ENCODE measurements at regions of chr1 and their contacts with region 1.

Region 1: DNA sequence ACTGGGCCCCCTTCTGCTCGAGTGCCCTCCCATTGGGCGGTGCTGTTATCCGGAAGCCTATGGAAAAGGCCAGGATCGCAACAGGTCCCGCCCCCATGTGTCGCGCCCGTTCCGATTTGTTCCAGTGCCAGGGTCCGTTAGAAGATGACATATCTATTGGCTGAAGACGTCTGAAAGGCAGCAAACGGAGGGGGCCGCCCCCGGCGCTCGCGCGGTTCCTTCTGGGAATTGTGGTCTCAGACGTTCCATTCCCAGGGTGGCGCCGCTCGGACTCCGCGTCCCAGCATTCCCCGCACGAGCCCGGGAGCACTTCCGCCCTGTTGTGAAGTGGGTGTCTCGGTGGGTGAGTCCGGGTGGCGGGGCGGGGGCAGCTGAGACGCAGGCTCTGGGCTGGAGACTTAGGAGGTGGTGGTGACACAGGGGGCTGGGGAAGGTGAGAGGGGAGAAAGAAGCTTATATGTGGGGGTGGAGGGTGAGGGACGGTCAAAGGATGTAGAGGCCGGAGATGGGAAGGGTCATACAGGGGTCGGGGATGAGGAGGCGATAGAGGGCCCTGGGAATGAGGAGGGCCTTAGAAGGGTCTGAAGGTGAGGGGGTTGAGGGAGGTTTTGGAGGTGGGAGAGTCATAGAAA is at the start of gene ZSCAN20:
- DNase-seq: peak; percentile 96 to 98
- ATAC-seq: peak; percentile 94 to 95
- H3K4me3 ChIP-seq: peak within 1 kb of the TSS; percentile 63 to 75 (median 72)
- H3K27ac ChIP-seq: peak within 1 kb of the TSS; percentile 80 to 88 (median 85)
- H3K4me1 ChIP-seq: peaks cover 16 to 35% of the 10 kb centered on the region in 2 donors
- H3K27me3 ChIP-seq: no peaks in the 10 kb centered on the region
- CTCF ChIP-seq: no peak
- POLR2A ChIP-seq: peak; percentile 19 to 31
- total RNA-seq, gene ZSCAN20: 2.7 to 7.0 (median 4.2) TPM

Region 2: DNA sequence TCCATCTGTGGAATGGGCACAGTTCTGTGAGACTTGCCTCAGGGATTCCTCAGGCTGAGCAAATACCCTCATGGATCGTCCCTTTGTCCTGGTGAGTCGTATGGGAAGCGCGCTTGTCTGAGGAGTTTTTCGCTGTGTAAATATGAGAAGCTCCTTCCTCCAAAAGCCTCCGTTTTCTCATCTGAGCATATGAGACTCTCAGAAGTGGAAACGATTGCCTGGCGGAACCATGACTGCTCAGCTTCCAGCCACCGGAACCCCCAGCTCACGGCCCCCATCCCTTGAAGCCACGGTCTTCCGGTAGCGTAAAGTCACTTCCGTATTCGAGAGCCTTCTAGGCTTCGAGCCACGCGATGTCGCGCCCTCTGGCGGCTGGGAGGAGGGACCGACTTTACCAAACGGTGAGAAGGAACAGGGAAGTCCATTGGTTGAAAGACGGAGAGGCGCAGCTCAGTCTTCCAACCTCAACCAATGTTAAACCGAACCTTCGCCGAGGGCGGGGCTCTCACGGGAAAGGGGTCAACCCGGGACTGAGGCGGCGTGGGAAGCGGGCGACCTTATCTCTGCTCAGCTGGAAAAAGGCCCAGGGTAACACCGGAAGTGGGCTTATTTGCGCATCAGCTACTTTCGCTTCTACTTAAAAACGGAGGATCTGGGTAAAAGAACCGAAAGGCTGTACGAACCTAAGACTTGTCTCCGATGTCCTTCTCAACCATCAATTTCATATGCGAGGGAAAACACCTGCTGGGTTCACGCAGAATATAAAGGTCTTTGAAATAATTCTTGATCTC is 345.3 kb before region 1 on chr1:
- in situ Hi-C with region 1: loop called in 1 of 4 experiments (anchors 10 kb)
- intact Hi-C with region 1: loop called (anchors 2 kb)
- DNase-seq: peak; percentile 97 to 99
- ATAC-seq: peak; percentile 96 to 98
- H3K4me3 ChIP-seq: peak overlapping the region; percentile 68 to 86 (median 76)
- H3K27ac ChIP-seq: peak overlapping the region; percentile 85 to 91 (median 86)
- H3K4me1 ChIP-seq: peaks cover 8 to 26% of the 10 kb centered on the region in 2 donors
- H3K27me3 ChIP-seq: no peaks in the 10 kb centered on the region
- CTCF ChIP-seq: peak; percentile 71 to 93 (median 91)
- POLR2A ChIP-seq: peak; percentile 29 to 39

Region 3: DNA sequence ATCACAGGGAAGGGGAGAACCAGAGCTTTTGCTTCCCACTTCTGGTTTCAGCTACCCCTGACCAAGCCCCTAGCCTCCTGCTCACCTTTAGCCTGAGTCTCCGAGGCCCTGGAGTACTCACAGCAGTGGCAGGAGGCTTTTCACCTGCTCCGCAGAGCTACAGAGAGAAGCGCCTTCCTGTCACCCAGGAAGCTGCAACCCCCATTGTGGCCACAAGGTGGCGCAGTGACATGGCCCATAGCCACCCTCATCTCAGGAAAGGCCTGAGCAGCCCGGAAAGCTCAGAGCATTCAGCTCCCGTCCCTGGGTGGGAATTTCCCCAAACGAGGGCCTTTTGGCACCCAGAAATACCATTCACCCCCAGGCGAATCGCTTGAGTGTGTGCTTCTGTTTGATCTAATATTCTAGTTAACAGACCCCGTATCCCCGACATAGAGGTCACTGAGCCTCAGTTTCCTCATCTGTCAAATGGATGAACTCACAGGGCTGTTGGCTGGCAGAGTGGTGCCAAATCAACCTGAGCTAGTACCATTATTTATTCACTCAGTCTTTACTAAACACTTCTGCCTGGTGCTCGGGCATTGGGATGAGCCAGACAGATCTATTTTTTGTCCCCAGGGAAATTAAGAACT is 176.9 kb before region 1 on chr1:
- in situ Hi-C with region 1: loop called in 3 of 4 experiments (anchors 5 to 10 kb)
- intact Hi-C with region 1: loop called (anchors 1 kb)
- DNase-seq: peak; percentile 63 to 84
- ATAC-seq: peak; percentile 83 to 92
- H3K4me3 ChIP-seq: no peak overlapping the region
- H3K27ac ChIP-seq: peak overlapping the region; percentile 8 to 41 (median 20)
- H3K4me1 ChIP-seq: peaks cover 4 to 14% of the 10 kb centered on the region in 2 donors
- H3K27me3 ChIP-seq: no peaks in the 10 kb centered on the region
- CTCF ChIP-seq: peak; percentile 94 to 99 (median 98)
- POLR2A ChIP-seq: no peak

Region 4: DNA sequence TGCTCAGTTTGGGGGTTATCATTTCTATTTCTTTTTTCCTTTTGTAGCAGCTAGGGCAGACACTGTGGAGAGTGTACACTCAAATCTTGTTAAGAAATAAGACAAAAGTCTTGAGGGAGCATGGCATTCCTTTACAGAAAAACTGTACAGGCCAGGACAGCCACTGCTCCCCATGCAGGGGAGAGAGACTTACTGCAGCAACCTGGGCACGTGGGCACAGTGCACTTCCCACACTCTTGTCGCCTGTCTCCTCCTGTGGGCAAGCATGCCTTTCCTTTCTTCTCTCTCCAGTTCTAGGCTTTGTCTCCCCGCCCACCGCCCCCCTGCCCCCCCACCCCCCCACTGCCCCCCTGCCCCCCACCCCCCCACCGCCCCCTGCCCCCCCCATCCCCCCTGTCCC is 93.5 kb before region 1 on chr1:
- in situ Hi-C with region 1: loop called in 3 of 4 experiments (anchors 10 to 25 kb)
- intact Hi-C with region 1: no loop called
- DNase-seq: no peak
- ATAC-seq: no peak
- H3K4me3 ChIP-seq: no peak overlapping the region
- H3K27ac ChIP-seq: no peak overlapping the region
- H3K4me1 ChIP-seq: peaks cover 37 to 41% of the 10 kb centered on the region in 2 donors
- H3K27me3 ChIP-seq: no peaks in the 10 kb centered on the region
- CTCF ChIP-seq: no peak
- POLR2A ChIP-seq: no peak

Region 5: DNA sequence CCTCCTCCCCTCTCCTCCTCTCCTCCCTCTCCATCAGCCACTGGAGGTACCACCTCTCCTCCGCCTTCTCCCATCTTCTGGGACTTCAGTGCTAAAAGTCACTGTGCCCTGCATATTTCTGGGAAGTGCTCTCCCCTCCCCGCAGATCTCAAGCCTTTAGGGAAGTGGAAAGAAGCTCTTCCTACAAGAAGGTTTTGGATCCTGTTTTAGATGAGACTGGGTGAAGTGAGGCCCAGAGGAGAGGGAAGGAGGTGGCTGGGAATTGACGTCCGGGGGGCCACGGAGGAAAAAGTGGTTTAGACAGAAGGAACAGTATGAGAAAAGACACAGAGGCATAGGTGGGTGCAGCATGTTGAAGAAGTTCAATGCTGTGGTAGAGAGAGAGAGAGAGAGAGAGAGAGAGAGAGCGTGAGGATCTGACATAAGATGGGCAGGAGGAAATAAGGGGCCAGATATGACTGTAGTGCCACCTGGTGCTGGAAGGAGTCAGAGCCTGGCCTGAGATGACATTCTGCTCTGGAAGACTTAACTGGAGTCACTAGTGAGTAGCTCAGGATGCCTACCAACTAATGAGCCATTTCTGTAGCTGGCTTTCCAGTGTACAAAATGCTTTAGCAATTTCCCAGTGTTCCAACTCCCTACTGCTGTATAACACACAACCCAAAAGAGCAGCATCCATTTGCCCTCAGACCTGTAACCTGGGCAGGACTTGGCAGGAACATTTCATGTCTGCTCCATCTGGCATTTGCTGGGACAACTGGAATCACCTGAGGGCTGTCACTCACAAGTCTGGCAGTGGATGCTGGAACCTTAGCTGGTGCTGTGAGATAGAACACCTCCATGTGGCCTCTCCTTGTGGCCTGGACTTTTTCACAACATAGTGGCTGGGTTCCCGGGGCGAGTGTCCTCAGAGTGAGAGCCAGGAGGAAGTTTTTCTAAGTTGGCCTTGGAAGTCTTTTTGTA is 16.6 kb before region 1 on chr1:
- in situ Hi-C with region 1: no loop called
- intact Hi-C with region 1: loop called (anchors 2 kb)
- DNase-seq: peak; percentile 90 to 96
- ATAC-seq: peak; percentile 86 to 90
- H3K4me3 ChIP-seq: no peak overlapping the region
- H3K27ac ChIP-seq: peak overlapping the region; percentile 78 to 84 (median 80)
- H3K4me1 ChIP-seq: peaks cover 32 to 43% of the 10 kb centered on the region in 2 donors
- H3K27me3 ChIP-seq: no peaks in the 10 kb centered on the region
- CTCF ChIP-seq: peak; percentile 54 to 73 (median 68)
- POLR2A ChIP-seq: no peak

Region 6: DNA sequence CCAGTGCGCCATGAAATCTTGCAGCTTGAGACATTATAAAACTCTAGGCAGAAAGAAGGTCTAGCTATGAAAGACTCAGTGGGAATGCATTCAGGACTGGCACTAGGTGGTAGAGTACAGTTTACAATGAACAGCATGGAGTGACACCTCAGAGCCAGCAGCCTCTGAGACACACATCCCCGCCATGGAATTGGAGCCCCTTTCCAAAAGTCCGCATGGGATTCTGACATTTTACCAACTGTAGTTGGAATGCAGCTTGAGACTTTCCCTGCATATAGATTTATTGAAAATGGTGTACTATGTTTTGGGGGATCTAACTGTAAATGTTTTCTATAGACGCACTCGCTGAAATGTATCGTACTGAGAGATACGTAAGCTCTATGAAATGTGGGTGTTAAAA is 116.3 kb after region 1 on chr1:
- in situ Hi-C with region 1: no loop called
- intact Hi-C with region 1: no loop called
- DNase-seq: no peak
- ATAC-seq: no peak
- H3K4me3 ChIP-seq: no peak overlapping the region
- H3K27ac ChIP-seq: no peak overlapping the region
- H3K4me1 ChIP-seq: no peaks in the 10 kb centered on the region
- H3K27me3 ChIP-seq: no peaks in the 10 kb centered on the region
- CTCF ChIP-seq: no peak
- POLR2A ChIP-seq: no peak